ENCODE measurements at regions of chr1 and their contacts with region 1.

Region 1: DNA sequence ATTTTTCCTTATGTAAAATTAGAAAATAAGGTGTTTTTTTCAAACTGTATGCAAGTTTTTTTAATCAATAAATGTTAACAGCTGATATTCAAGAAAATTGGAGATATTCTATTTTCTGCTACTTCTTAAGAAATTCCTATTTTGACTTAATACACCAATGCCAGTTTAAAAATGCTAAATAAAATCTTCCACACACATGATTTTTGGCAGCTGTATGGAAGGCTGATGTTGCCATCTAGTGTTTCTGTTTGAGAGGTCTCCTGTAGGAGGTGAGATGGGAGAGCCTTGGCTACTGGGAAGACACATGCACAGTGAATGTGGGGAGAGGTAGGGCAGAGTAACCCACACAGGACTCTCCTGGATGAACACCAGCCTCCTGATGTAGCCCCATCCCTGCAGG is 29.2 kb upstream of the OR2B11 start:
- DNase-seq: peak; percentile 61 to 70 (median 68)
- H3K4me3 ChIP-seq: no peak overlapping the region
- H3K4me3 Mint-ChIP-seq: no peak overlapping the region
- H3K27ac ChIP-seq: no peak overlapping the region
- H3K27ac Mint-ChIP-seq: peak overlapping the region in 1 of 7 donors; percentile 64
- H3K4me1 ChIP-seq: no peaks in the 10 kb centered on the region
- H3K4me1 Mint-ChIP-seq: peaks cover 2% of the 10 kb centered on the region
- H3K27me3 ChIP-seq: no peaks in the 10 kb centered on the region
- H3K27me3 Mint-ChIP-seq: peaks cover 0 to 5% (median 0%) of the 10 kb centered on the region in 3 donors
- CTCF ChIP-seq: peak; percentile 83

Region 2: GRCh38 chr1:247373721-247374141 is 113.3 kb before region 1 on chr1:
- intact Hi-C with region 1: loop called (anchors 5 kb)
- DNase-seq: peak; percentile 44 to 59 (median 49)
- H3K4me3 ChIP-seq: peak overlapping the region; percentile 3 to 62 (median 18)
- H3K4me3 Mint-ChIP-seq: peak overlapping the region; percentile 33 to 58
- H3K27ac ChIP-seq: no peak overlapping the region
- H3K27ac Mint-ChIP-seq: no peak overlapping the region
- H3K4me1 ChIP-seq: peaks cover 5 to 9% of the 10 kb centered on the region in 2 donors
- H3K4me1 Mint-ChIP-seq: peaks cover 15% of the 10 kb centered on the region
- H3K27me3 ChIP-seq: no peaks in the 10 kb centered on the region
- H3K27me3 Mint-ChIP-seq: peaks cover 1 to 3% (median 2%) of the 10 kb centered on the region in 3 donors
- CTCF ChIP-seq: peak; percentile 65

Region 3: DNA sequence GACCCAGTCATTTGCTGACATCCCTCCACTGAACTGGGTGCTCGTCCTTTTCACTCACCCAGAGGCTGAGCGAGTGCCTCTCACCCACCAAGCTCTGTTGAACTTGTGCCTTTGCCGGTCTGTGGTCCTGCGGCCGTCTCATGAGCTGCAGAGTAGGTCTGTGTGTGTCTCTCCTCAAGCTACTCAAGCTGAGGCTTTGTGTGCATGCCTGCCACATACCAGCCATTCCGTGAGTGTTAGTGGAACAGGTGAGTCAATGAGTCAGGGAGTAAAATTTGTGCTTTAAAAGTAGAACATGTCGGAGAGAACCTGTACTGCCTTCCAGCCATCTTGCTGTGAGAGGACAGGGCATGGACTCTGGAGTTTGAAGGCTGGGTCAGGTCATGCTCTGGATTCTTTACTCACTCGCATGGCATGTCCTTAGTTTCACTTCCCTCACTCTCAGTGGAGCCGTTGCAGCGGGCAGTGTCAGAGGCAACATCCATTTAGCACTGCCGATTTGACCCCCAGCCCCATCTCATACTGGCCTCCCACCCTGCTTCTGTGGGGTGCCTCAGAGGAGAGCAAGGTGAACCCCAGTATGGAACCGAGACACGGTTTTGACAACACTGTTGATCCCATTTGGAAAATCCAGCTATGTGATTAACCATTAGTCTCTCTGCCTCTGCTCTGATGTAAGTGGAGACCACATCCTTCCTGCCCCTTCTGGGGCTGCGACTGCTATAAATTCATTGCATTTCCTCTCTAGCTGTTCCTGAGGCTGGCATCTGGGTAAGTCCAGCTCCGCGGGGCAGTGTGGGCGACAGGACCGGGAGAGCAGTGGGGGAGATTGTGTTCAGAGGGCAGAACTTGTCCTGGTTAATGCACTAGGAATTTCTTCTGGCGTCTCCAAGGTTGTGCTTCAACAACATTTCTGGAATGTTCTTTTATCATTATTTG is 71.4 kb before region 1 on chr1 and contains the start of gene NLRP3:
- intact Hi-C with region 1: loop called (anchors 10 kb)
- DNase-seq: peak; percentile 85 to 94 (median 89)
- H3K4me3 ChIP-seq: peak within 1 kb of the TSS; percentile 79 to 100 (median 96)
- H3K4me3 Mint-ChIP-seq: peak within 1 kb of the TSS; percentile 95 to 99
- H3K27ac ChIP-seq: peak within 1 kb of the TSS; percentile 89 to 96
- H3K27ac Mint-ChIP-seq: peak within 1 kb of the TSS; percentile 97 to 99 (median 98)
- H3K4me1 ChIP-seq: peaks cover 75 to 86% of the 10 kb centered on the region in 2 donors
- H3K4me1 Mint-ChIP-seq: peaks cover 69% of the 10 kb centered on the region
- H3K27me3 ChIP-seq: no peaks in the 10 kb centered on the region
- H3K27me3 Mint-ChIP-seq: peaks cover 0 to 3% (median 0%) of the 10 kb centered on the region in 3 donors
- CTCF ChIP-seq: no peak
- polyA plus RNA-seq, gene NLRP3: 56.2 to 400 (median 61.9) TPM

Region 4: GRCh38 chr1:247421074-247421473 is 66.0 kb before region 1 on chr1:
- intact Hi-C with region 1: loop called (anchors 10 kb)
- DNase-seq: peak in 2 of 3 donors; percentile 41 to 59
- H3K4me3 ChIP-seq: peak overlapping the region; percentile 79 to 100 (median 96)
- H3K4me3 Mint-ChIP-seq: peak overlapping the region; percentile 92 to 95
- H3K27ac ChIP-seq: peak overlapping the region; percentile 4 to 79
- H3K27ac Mint-ChIP-seq: peak overlapping the region; percentile 57 to 99 (median 88)
- H3K4me1 ChIP-seq: peaks cover 72 to 83% of the 10 kb centered on the region in 2 donors
- H3K4me1 Mint-ChIP-seq: peaks cover 74% of the 10 kb centered on the region
- H3K27me3 ChIP-seq: no peaks in the 10 kb centered on the region
- H3K27me3 Mint-ChIP-seq: peaks cover 0 to 4% (median 0%) of the 10 kb centered on the region in 3 donors
- CTCF ChIP-seq: no peak

Region 5: GRCh38 chr1:247448107-247448791 is 38.8 kb before region 1 on chr1:
- intact Hi-C with region 1: loop called in 1 of 2 experiments (anchors 5 kb)
- DNase-seq: peak in 1 of 3 donors; percentile 69
- H3K4me3 ChIP-seq: no peak overlapping the region
- H3K4me3 Mint-ChIP-seq: no peak overlapping the region
- H3K27ac ChIP-seq: no peak overlapping the region
- H3K27ac Mint-ChIP-seq: peak overlapping the region; percentile 44 to 99 (median 85)
- H3K4me1 ChIP-seq: peaks cover 39 to 52% of the 10 kb centered on the region in 2 donors
- H3K4me1 Mint-ChIP-seq: peaks cover 73% of the 10 kb centered on the region
- H3K27me3 ChIP-seq: no peaks in the 10 kb centered on the region
- H3K27me3 Mint-ChIP-seq: no peaks in the 10 kb centered on the region
- CTCF ChIP-seq: no peak

Region 6: GRCh38 chr1:247669221-247669620 is 182.2 kb after region 1 on chr1:
- intact Hi-C with region 1: no loop called
- DNase-seq: no peak
- H3K4me3 ChIP-seq: no peak overlapping the region
- H3K4me3 Mint-ChIP-seq: no peak overlapping the region
- H3K27ac ChIP-seq: no peak overlapping the region
- H3K27ac Mint-ChIP-seq: no peak overlapping the region
- H3K4me1 ChIP-seq: no peaks in the 10 kb centered on the region
- H3K4me1 Mint-ChIP-seq: no peaks in the 10 kb centered on the region
- H3K27me3 ChIP-seq: no peaks in the 10 kb centered on the region
- H3K27me3 Mint-ChIP-seq: no peaks in the 10 kb centered on the region
- CTCF ChIP-seq: no peak

Measured in CD14-positive monocyte (primary cell).